B cell (primary cell): ENCODE measurements at regions of chr12 and their contacts with region 1.

Region 1: DNA sequence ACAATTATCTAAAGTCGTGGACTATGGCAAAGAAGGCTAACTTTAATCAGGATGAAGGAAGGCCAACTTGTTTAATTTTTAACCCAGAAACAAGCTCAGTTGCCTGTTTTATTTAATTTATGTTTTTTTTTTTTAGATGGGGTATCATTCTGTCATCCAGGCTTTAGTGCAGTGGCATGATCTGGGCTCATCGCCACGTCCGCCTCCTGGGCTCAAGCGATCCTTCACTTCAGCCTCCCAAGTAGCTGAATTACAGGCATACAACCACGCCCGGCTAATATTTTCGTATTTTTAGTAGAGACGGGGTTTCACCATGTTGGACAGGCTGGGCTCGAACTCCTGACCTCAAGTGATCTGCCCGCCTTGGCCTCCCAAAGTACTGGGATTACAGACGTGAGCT is 19.7 kb downstream of the NUDT4 start:
- DNase-seq: no peak
- ATAC-seq: no peak
- H3K4me3 ChIP-seq: no peak overlapping the region
- H3K4me3 Mint-ChIP-seq: no peak overlapping the region
- H3K27ac ChIP-seq: no peak overlapping the region
- H3K27ac Mint-ChIP-seq: no peak overlapping the region
- H3K4me1 ChIP-seq: no peaks in the 10 kb centered on the region
- H3K4me1 Mint-ChIP-seq: peaks cover 9% of the 10 kb centered on the region
- H3K27me3 ChIP-seq: no peaks in the 10 kb centered on the region
- H3K27me3 Mint-ChIP-seq: no peaks in the 10 kb centered on the region
- CTCF ChIP-seq: no peak

Region 2: DNA sequence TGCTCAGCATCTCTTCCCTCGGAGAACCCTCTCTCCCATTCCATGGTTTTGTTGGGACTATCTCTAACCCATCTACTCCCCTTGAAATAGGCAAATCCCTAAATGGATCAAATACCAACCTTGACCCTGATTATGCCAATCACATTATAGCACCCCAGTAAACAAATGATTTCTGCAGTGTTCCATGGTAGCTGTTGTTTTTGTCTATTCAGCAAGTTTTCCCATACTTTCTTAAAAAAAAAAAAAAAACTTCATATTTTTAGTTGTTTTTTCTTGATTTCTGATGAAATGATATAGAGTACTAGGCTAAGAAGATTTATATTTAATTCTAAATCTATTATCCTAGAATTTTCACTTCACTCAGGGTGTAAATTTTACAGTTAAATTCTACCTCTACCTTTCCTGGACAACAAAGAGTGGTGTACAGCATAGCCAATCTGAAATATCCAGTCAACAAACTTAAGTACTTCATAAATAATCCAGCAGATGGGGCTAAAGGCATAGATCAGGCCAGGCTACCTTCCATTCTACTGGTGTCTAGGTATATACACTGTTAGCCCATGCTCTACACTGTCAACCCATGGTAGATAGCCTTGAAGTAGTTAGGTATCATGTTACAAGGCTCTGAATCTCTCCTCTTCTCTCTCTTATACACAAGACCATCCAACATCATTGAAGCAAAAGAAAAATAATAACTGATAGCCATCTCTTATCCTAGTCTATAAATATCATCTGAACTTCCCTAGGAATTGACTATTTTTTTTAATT is 612.4 kb before region 1 on chr12:
- CTCF ChIA-PET with region 1: interaction called, 40 read pairs
- POLR2A ChIA-PET with region 1: no interaction called
- intact Hi-C with region 1: loop called (anchors 2 kb)
- DNase-seq: peak; percentile 75
- ATAC-seq: peak; percentile 98
- H3K4me3 ChIP-seq: no peak overlapping the region
- H3K4me3 Mint-ChIP-seq: no peak overlapping the region
- H3K27ac ChIP-seq: no peak overlapping the region
- H3K27ac Mint-ChIP-seq: no peak overlapping the region
- H3K4me1 ChIP-seq: no peaks in the 10 kb centered on the region
- H3K4me1 Mint-ChIP-seq: no peaks in the 10 kb centered on the region
- H3K27me3 ChIP-seq: no peaks in the 10 kb centered on the region
- H3K27me3 Mint-ChIP-seq: no peaks in the 10 kb centered on the region
- CTCF ChIP-seq: peak; percentile 81

Region 3: GRCh38 chr12:92827836-92828431 is 569.5 kb before region 1 on chr12:
- CTCF ChIA-PET with region 1: interaction called, 4 read pairs
- POLR2A ChIA-PET with region 1: no interaction called
- intact Hi-C with region 1: loop called (anchors 2 kb)
- DNase-seq: peak; percentile 35
- ATAC-seq: no peak
- H3K4me3 ChIP-seq: no peak overlapping the region
- H3K4me3 Mint-ChIP-seq: no peak overlapping the region
- H3K27ac ChIP-seq: no peak overlapping the region
- H3K27ac Mint-ChIP-seq: no peak overlapping the region
- H3K4me1 ChIP-seq: no peaks in the 10 kb centered on the region
- H3K4me1 Mint-ChIP-seq: no peaks in the 10 kb centered on the region
- H3K27me3 ChIP-seq: no peaks in the 10 kb centered on the region
- H3K27me3 Mint-ChIP-seq: no peaks in the 10 kb centered on the region
- CTCF ChIP-seq: peak; percentile 63

Region 4: DNA sequence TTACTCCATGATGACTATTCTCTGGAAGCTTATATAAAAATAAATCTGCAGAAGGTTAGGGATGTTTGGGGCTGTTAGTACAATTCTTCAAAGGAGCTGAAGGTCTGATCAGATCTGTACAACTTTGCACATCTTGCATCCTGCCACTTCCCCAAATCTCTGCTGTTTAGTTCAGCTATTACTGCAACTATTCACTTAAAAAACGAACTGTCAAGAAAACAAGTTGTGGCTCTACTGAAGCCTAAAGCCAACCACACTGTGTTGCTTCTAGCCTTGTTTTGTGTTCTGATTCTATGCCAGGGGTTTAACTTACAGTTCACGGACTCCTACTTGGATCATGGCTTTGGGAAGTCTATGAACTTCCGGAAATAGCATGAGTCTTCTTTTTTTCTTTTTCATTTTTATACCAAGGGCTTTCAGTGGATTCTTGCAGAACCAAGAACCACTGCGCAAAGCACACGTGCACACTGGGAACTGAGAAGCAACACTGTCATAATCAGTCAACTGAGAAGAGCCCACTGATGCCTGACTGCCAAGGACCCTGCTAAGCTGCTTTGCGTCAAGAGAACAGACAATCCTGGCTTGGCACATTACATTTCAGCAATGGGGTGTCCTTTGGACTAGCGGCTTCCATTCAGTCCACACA is 402.0 kb before region 1 on chr12:
- CTCF ChIA-PET with region 1: interaction called, 22 read pairs
- POLR2A ChIA-PET with region 1: no interaction called
- intact Hi-C with region 1: loop called (anchors 2 kb)
- DNase-seq: peak; percentile 79
- ATAC-seq: peak; percentile 94
- H3K4me3 ChIP-seq: peak overlapping the region in 1 of 5 experiments; percentile 6
- H3K4me3 Mint-ChIP-seq: peak overlapping the region; percentile 77
- H3K27ac ChIP-seq: peak overlapping the region; percentile 66 to 68
- H3K27ac Mint-ChIP-seq: peak overlapping the region; percentile 93
- H3K4me1 ChIP-seq: peaks cover 12 to 30% of the 10 kb centered on the region in 2 donors
- H3K4me1 Mint-ChIP-seq: peaks cover 27% of the 10 kb centered on the region
- H3K27me3 ChIP-seq: no peaks in the 10 kb centered on the region
- H3K27me3 Mint-ChIP-seq: no peaks in the 10 kb centered on the region
- CTCF ChIP-seq: no peak

Region 5: GRCh38 chr12:93025145-93025805 is 372.1 kb before region 1 on chr12:
- CTCF ChIA-PET with region 1: interaction called, 5 read pairs
- POLR2A ChIA-PET with region 1: no interaction called
- intact Hi-C with region 1: loop called (anchors 2 kb)
- DNase-seq: peak; percentile 56
- ATAC-seq: peak; percentile 45
- H3K4me3 ChIP-seq: no peak overlapping the region
- H3K4me3 Mint-ChIP-seq: no peak overlapping the region
- H3K27ac ChIP-seq: no peak overlapping the region
- H3K27ac Mint-ChIP-seq: no peak overlapping the region
- H3K4me1 ChIP-seq: no peaks in the 10 kb centered on the region
- H3K4me1 Mint-ChIP-seq: no peaks in the 10 kb centered on the region
- H3K27me3 ChIP-seq: no peaks in the 10 kb centered on the region
- H3K27me3 Mint-ChIP-seq: no peaks in the 10 kb centered on the region
- CTCF ChIP-seq: peak; percentile 51

Region 6: GRCh38 chr12:93098077-93098476 is 299.3 kb before region 1 on chr12:
- CTCF ChIA-PET with region 1: interaction called, 57 read pairs
- POLR2A ChIA-PET with region 1: no interaction called
- intact Hi-C with region 1: loop called (anchors 2 kb)
- DNase-seq: peak; percentile 90
- ATAC-seq: peak; percentile 97
- H3K4me3 ChIP-seq: no peak overlapping the region
- H3K4me3 Mint-ChIP-seq: peak overlapping the region; percentile 36
- H3K27ac ChIP-seq: no peak overlapping the region
- H3K27ac Mint-ChIP-seq: peak overlapping the region; percentile 73
- H3K4me1 ChIP-seq: peaks cover 13 to 14% of the 10 kb centered on the region in 2 donors
- H3K4me1 Mint-ChIP-seq: peaks cover 22% of the 10 kb centered on the region
- H3K27me3 ChIP-seq: no peaks in the 10 kb centered on the region
- H3K27me3 Mint-ChIP-seq: no peaks in the 10 kb centered on the region
- CTCF ChIP-seq: peak; percentile 83

Region 7: DNA sequence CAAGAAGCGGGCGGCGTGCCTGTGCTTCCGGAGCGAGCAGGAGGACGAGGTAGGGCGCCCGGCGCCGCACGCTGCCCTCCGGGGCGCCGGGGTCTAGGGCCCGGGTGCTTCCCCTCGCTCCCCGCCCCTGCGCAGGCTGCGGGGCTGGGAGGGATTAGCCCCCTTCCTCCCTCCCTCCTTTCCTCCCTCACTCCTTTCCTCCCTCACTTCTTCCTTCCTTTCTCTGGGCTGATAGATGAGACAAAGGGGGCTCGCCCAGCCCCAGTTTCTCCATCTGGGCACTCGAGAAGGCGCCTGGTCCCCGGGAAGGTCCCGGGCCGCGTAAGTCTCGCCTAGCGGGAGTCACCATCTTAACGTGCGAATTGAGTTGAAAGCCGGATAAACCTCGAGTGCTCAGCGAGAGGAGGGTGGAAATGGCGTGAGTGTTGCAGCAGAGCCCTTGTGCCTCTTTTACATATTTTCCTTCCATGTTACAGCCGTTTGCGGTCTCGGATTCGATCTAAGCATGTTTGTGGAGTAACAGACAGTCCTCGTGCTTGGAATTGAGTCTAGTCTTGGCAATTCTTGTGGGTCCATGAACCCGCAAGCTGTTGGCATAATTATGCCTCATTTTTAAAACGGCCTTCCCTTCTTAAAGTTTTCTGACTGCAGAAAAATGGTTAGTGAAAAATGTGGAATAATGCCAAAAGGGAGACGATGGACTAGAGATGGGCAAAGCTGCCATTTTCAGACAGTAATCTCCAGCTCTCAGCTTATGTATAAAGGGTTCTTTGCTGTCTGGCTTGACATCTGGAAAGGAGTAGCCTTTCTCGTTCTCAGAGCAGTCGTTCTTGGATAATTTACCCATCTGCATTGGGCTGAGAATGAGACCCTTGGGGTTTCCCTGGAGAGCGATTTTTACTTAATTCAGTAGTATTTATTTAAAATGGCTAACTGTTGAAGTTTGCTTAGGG is 18.8 kb before region 1 on chr12:
- CTCF ChIA-PET with region 1: interaction called, 51 read pairs
- POLR2A ChIA-PET with region 1: no interaction called
- intact Hi-C with region 1: loop called (anchors 2 kb)
- DNase-seq: peak; percentile 76
- ATAC-seq: peak; percentile 44
- H3K4me3 ChIP-seq: peak overlapping the region; percentile 73 to 96 (median 86)
- H3K4me3 Mint-ChIP-seq: peak overlapping the region; percentile 98
- H3K27ac ChIP-seq: peak overlapping the region; percentile 75 to 89
- H3K27ac Mint-ChIP-seq: peak overlapping the region; percentile 98
- H3K4me1 ChIP-seq: peaks cover 20 to 29% of the 10 kb centered on the region in 2 donors
- H3K4me1 Mint-ChIP-seq: peaks cover 40% of the 10 kb centered on the region
- H3K27me3 ChIP-seq: no peaks in the 10 kb centered on the region
- H3K27me3 Mint-ChIP-seq: no peaks in the 10 kb centered on the region
- CTCF ChIP-seq: no peak